ENCODE measurements at regions of chr3 and their contacts with region 1.

Region 1: GRCh38 chr3:114827495-114827894 is 319.6 kb downstream of the ZBTB20 start:
- DNase-seq: peak; percentile 22
- CTCF ChIP-seq: peak; percentile 68

Region 2: GRCh38 chr3:115169808-115170207 is 342.3 kb after region 1 on chr3:
- in situ Hi-C with region 1: loop called (anchors 10 kb)
- DNase-seq: no peak
- CTCF ChIP-seq: no peak

Region 3: DNA sequence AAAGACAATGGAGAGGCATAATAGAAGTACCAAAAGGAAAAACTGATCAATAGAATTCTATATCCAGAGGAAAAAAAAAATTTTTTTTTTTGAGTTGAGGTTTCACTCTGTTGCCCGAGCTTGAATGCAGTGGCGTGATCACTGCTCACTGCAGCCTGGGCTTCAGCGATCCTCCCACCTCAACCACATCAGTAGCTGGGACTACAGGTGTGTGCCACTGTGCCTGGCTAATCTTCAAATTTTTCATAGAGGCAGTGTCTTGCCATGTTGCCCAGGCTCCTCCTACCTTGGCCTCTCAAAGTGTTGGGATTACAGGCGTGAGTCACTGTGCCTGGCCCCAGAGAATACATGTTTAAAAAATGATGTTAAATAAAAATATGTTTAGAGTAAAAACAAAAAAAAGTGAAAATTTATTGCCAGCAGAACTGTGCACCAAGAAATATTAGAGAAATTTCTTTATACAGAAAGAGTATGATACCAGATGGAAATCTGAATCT is 473.9 kb after region 1 on chr3:
- in situ Hi-C with region 1: no loop called
- DNase-seq: no peak
- CTCF ChIP-seq: no peak

Region 4: DNA sequence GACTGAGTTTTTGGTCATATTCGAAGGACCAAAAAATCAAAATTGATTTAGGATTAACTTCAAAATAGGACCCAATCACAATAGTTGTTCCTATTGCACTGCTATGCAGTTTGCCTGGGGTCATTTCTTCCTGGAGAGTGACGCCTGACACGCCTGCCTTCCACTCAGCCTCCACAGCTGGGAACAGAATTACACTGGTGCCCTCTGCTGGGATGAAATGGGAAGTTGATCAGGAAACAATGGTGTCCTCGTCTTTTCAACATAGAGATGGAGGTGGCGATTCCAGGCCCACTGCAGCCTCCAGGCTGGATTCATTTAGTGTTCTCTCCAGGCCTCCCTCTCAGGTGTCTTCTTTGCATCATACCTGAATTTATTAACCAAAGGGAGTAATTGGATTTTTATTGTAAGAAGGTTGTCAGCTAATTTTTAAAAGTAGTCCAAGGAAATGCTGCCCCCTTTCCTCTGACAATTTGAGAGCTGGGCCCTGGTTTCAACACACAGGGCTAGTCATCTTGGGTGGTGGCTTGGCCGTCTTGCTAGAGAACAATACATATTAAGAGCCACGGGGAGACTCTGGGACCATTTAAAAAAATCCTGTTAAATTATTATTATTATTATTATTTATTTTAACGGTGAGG is 865.5 kb after region 1 on chr3:
- in situ Hi-C with region 1: loop called (anchors 25 kb)
- DNase-seq: peak; percentile 62
- CTCF ChIP-seq: peak; percentile 79

Region 5: DNA sequence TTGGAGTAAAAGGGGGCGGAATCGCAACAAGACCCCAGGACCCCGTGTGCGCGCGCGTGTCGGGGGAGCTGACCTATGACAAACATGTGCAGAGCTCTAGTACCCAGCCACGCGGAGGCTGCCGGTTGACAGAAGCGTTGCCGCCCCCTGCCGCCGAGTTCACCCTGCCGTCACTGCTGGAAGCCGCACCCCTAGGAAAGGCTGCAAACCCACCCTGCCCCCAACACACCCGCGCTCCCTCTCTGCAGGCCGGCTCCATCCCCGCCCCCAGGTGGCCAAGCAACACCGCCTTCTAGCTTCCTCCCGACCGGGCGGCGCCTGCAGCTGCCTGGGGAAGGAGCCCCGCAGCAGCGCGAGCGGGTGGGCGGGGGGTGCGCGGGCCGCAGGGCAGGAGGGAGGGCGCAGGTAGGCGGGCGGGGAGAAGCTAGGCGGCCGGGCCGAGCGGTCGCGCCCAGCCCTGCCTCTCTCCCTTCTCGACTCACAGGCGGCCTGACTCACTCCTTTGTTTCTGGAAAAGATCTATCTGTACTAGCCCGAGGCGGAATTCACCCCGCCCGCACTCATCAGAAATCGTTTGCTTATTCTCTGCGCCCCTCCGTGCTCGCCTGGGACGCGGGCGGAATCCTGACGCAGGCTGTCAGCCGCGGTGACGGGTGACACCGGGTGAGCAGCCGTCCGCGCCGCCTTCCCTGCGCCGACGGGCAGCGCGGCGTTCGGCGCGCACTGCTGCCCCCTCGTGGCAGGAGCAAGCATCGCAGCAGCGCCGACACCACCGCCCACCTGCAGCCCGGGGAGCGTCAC is 956.6 kb after region 1 on chr3:
- in situ Hi-C with region 1: loop called (anchors 25 kb)
- DNase-seq: peak; percentile 93
- CTCF ChIP-seq: peak; percentile 100